MCF 10A (cell line): ENCODE measurements at regions of chr3 and their contacts with region 1.

Region 1: GRCh38 chr3:85360742-85361387 is 402.1 kb downstream of the CADM2 start:
- DNase-seq: peak; percentile 57
- H3K4me3 Mint-ChIP-seq: no peak overlapping the region
- H3K27ac Mint-ChIP-seq: no peak overlapping the region
- H3K4me1 Mint-ChIP-seq: no peaks in the 10 kb centered on the region
- H3K27me3 Mint-ChIP-seq: peaks cover 34% of the 10 kb centered on the region
- CTCF ChIP-seq: peak; percentile 49

Region 2: GRCh38 chr3:84974347-84974746 is 386.5 kb before region 1 on chr3:
- CTCF ChIA-PET with region 1: no interaction called
- POLR2A ChIA-PET with region 1: no interaction called
- intact Hi-C with region 1: loop called (anchors 10 kb)
- DNase-seq: peak; percentile 7
- H3K4me3 Mint-ChIP-seq: no peak overlapping the region
- H3K27ac Mint-ChIP-seq: no peak overlapping the region
- H3K4me1 Mint-ChIP-seq: no peaks in the 10 kb centered on the region
- H3K27me3 Mint-ChIP-seq: peaks cover 64% of the 10 kb centered on the region
- CTCF ChIP-seq: no peak

Region 3: DNA sequence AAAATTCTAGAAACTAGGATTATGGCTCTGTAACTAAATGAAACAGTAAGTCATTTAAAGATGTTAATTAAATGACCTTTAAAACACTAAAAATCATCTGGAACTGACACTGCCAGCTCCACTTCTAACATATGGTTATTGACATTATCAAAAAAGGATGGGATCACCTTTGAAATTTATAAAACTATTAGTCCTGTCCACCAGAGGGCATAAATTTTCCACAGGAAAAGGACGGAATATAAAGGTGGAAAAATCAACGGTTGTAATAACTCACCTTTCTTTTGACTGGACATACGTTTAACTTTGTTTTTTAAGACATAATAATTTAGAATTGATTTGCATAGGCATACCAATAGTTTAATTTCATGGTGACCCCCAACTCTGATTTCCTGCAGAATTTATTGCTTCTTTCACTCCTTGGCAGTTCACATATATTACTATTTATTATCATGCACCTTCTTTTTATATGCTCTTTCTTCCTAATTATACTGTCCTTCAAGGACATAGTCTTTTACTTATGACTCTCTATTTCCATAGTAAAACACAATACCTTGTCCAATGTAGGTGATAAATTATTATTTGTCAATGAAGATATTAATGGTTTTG is 56.4 kb before region 1 on chr3:
- CTCF ChIA-PET with region 1: interaction called, 4 read pairs
- POLR2A ChIA-PET with region 1: no interaction called
- intact Hi-C with region 1: loop called (anchors 1 kb)
- DNase-seq: peak; percentile 28
- H3K4me3 Mint-ChIP-seq: no peak overlapping the region
- H3K27ac Mint-ChIP-seq: no peak overlapping the region
- H3K4me1 Mint-ChIP-seq: no peaks in the 10 kb centered on the region
- H3K27me3 Mint-ChIP-seq: peaks cover 57% of the 10 kb centered on the region
- CTCF ChIP-seq: peak; percentile 25